Common myeloid progenitor, CD34-positive (primary cell): ENCODE measurements at regions of chr10 and their contacts with region 1.

Region 1: DNA sequence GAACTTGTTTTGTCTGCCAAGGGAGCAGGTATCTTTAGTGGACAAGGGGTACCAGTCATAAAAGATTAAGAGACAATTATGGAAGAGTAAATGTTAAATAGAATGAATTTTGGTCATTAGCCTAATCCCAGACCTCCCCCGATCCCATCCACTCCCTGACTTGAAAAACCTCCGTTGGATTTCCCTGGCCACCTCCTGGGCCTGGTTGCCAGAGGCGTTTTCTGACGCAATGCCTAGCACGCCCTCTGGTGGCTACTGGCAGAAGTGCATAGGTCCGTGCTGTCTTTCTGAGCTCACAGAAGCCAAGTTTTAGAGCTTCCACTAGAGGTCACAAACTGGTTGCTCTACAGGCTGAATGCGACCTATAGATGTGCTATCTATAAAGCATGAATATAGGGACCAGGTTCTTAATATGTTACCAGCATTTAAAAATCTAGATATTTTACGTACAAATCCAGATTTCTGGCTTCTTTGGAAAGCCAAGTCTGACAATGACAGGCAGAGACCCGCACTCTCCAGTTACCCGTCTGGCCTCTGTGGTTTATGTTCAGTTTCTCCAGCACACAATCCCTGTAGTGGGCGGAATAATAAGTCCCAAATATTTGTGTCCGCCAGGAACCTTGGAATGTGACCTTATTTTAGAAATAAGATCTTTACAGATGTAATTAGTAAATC is 39.8 kb downstream of the SPOCK2 start:
- DNase-seq: peak; percentile 88 to 93 (median 90)
- H3K4me3 ChIP-seq: no peak overlapping the region
- H3K27ac ChIP-seq: no peak overlapping the region
- H3K4me1 ChIP-seq: no peaks in the 10 kb centered on the region
- H3K27me3 ChIP-seq: no peaks in the 10 kb centered on the region

Region 2: GRCh38 chr10:71921324-71922027 is 127.1 kb before region 1 on chr10:
- CTCF ChIA-PET with region 1: no interaction called
- POLR2A ChIA-PET with region 1: no interaction called
- DNase-seq: peak in 2 of 3 donors; percentile 38 to 44
- H3K4me3 ChIP-seq: no peak overlapping the region
- H3K27ac ChIP-seq: no peak overlapping the region
- H3K4me1 ChIP-seq: no peaks in the 10 kb centered on the region
- H3K27me3 ChIP-seq: peaks cover 0 to 4% (median 0%) of the 10 kb centered on the region in 5 experiments

Region 3: GRCh38 chr10:71933651-71934050 is 114.9 kb before region 1 on chr10:
- CTCF ChIA-PET with region 1: no interaction called
- POLR2A ChIA-PET with region 1: no interaction called
- DNase-seq: no peak
- H3K4me3 ChIP-seq: no peak overlapping the region
- H3K27ac ChIP-seq: no peak overlapping the region
- H3K4me1 ChIP-seq: no peaks in the 10 kb centered on the region
- H3K27me3 ChIP-seq: no peaks in the 10 kb centered on the region

Region 4: GRCh38 chr10:72030762-72031543 is 17.6 kb before region 1 on chr10:
- CTCF ChIA-PET with region 1: interaction called, 12 read pairs
- POLR2A ChIA-PET with region 1: no interaction called
- DNase-seq: no peak
- H3K4me3 ChIP-seq: no peak overlapping the region
- H3K27ac ChIP-seq: no peak overlapping the region
- H3K4me1 ChIP-seq: no peaks in the 10 kb centered on the region
- H3K27me3 ChIP-seq: peaks cover 0 to 2% (median 0%) of the 10 kb centered on the region in 5 experiments

Region 5: DNA sequence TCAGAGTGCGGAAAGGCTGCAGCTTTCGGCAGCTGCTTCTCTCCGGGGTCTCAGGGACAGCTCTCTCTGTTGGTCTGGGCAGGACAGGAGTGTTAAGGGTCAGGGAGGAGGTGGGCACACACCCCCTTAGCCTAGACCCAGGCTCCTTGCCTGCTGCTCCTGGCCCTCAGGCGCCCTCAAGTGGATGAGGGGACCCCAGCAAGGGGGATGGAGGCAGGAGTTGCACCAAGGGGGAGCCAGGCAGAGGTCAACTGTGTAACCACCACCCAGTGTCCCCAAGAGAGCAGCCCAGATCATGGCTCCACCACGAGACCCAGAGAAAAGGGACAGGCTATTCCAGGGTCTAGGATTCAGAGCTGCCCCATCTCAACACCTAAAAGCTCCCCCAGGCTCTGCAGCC is 12.9 kb after region 1 on chr10:
- CTCF ChIA-PET with region 1: interaction called, 15 read pairs
- POLR2A ChIA-PET with region 1: no interaction called
- DNase-seq: no peak
- H3K4me3 ChIP-seq: no peak overlapping the region
- H3K27ac ChIP-seq: no peak overlapping the region
- H3K4me1 ChIP-seq: no peaks in the 10 kb centered on the region
- H3K27me3 ChIP-seq: no peaks in the 10 kb centered on the region

Region 6: DNA sequence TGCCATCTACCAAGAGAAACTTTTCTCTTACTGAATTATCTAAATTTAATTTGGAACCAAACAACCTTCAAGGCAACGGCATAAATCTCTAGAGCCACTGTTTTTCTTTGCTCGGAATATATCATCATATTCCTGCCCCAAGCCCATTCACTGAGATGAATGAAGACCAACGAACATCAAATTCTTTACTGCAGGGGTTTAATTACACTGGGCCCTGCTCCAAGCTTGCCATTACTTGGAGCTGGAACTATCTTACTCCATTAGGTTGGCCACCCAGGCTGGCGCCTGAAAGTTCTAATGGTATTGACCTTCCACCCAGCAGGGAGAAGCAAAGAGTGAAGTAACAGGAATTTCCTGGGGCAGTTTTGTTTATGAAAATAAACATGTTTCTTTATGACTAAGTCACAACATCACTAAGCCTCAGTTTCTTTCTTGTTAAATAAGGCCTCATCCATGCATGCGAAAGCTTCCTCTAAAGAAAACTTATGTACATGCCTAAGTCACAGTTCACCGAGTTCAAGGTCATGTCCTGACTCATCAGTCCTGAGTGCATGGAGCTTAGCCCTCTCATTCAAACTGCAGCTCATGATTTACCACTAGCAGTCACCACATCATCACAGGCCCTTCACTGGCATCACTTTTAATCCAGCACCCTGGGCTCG is 125.2 kb after region 1 on chr10:
- CTCF ChIA-PET with region 1: no interaction called
- POLR2A ChIA-PET with region 1: no interaction called
- DNase-seq: no peak
- H3K4me3 ChIP-seq: no peak overlapping the region
- H3K27ac ChIP-seq: no peak overlapping the region
- H3K4me1 ChIP-seq: peaks cover 6 to 38% (median 12%) of the 10 kb centered on the region in 4 experiments
- H3K27me3 ChIP-seq: no peaks in the 10 kb centered on the region